Endothelial cell of umbilical vein (primary cell): ENCODE measurements at regions of chr13 and their contacts with region 1.

Region 1: DNA sequence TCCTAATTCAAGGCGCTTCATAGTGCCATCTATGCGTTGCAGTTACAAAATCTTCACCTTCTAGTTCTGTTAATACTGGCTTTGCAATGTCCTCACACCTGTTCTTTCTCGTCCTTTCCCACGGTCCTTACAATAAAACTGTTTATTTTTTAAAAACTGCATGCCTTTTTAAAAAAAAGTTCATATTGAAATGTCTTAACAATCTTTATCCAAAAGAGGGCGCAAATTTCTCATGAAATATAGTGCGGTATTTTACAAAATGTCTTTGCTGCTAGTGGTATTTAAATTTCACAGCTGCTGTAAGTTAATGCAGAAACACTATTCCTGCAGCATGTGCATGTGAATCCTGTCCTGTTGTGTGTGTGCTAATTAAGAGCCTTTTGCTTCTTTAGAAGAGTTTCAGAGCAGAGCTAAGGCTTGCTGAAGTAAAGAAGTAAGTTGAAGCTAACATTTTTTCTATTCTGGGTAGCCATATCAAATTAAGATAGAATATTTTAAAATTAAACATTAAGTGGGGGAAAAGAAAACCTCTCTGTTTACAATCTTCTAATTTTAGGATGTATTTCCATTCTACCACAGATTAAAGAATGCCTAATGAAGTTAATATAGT is 15.8 kb upstream of the CLDN10 start:
- DNase-seq: peak; percentile 62
- H3K4me3 ChIP-seq: no peak overlapping the region
- H3K27ac ChIP-seq: no peak overlapping the region
- H3K4me1 ChIP-seq: peaks cover 34% of the 10 kb centered on the region
- H3K27me3 ChIP-seq: no peaks in the 10 kb centered on the region
- CTCF ChIP-seq: peak in 1 of 2 donors; percentile 25
- POLR2A ChIP-seq: no peak

Region 2: GRCh38 chr13:95426636-95427035 is 110.1 kb before region 1 on chr13:
- CTCF ChIA-PET with region 1: no interaction called
- POLR2A ChIA-PET with region 1: no interaction called
- dilution Hi-C with region 1: no loop called
- intact Hi-C with region 1: no loop called
- DNase-seq: no peak
- H3K4me3 ChIP-seq: no peak overlapping the region
- H3K27ac ChIP-seq: no peak overlapping the region
- H3K4me1 ChIP-seq: no peaks in the 10 kb centered on the region
- H3K27me3 ChIP-seq: no peaks in the 10 kb centered on the region
- CTCF ChIP-seq: no peak
- POLR2A ChIP-seq: no peak

Region 3: GRCh38 chr13:95494082-95494681 is 42.6 kb before region 1 on chr13:
- CTCF ChIA-PET with region 1: interaction called, 7 read pairs
- POLR2A ChIA-PET with region 1: no interaction called
- dilution Hi-C with region 1: no loop called
- intact Hi-C with region 1: loop called (anchors 2 kb)
- DNase-seq: peak; percentile 85
- H3K4me3 ChIP-seq: no peak overlapping the region
- H3K27ac ChIP-seq: no peak overlapping the region
- H3K4me1 ChIP-seq: no peaks in the 10 kb centered on the region
- H3K27me3 ChIP-seq: no peaks in the 10 kb centered on the region
- CTCF ChIP-seq: peak; percentile 48 to 59
- POLR2A ChIP-seq: no peak

Region 4: DNA sequence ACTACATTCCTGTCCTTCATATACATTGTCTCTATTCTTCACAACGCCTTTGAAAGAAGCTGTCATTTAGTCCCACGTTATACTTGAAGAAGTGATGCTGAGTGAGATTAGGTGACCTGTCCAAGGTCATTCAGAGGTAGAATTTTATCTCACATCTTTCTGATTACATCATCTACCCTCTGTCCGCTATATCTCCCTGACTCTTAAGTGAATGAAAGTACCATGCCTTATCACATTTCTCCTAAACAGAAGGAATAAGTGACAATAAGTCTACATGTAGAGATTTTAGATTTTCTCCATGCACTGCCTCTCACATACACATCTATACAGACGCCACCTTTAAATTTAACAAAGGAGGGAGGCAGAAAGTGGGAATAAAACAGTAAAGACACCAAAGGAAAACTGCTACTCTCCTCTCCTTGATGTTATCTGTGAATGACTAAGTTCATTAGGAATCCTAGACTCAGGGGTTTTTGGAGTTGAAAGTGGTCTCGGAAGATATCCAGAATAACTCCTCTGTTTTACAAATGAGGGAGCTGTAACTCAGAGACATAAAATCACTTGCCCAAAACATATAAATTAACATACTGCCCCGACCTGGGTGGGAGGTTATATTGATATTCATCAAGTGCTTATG is 10.9 kb after region 1 on chr13:
- CTCF ChIA-PET with region 1: interaction called, 34 read pairs
- POLR2A ChIA-PET with region 1: interaction called, 4 read pairs
- dilution Hi-C with region 1: no loop called
- intact Hi-C with region 1: no loop called
- DNase-seq: no peak
- H3K4me3 ChIP-seq: no peak overlapping the region
- H3K27ac ChIP-seq: no peak overlapping the region
- H3K4me1 ChIP-seq: no peaks in the 10 kb centered on the region
- H3K27me3 ChIP-seq: peaks cover 1 to 5% of the 10 kb centered on the region in 2 experiments
- CTCF ChIP-seq: no peak
- POLR2A ChIP-seq: no peak

Region 5: GRCh38 chr13:95564733-95565291 is 28.1 kb after region 1 on chr13:
- CTCF ChIA-PET with region 1: interaction called, 57 read pairs
- POLR2A ChIA-PET with region 1: no interaction called
- dilution Hi-C with region 1: no loop called
- intact Hi-C with region 1: no loop called
- DNase-seq: peak; percentile 91
- H3K4me3 ChIP-seq: no peak overlapping the region
- H3K27ac ChIP-seq: peak overlapping the region; percentile 44
- H3K4me1 ChIP-seq: peaks cover 11% of the 10 kb centered on the region
- H3K27me3 ChIP-seq: no peaks in the 10 kb centered on the region
- CTCF ChIP-seq: no peak
- POLR2A ChIP-seq: no peak

Region 6: DNA sequence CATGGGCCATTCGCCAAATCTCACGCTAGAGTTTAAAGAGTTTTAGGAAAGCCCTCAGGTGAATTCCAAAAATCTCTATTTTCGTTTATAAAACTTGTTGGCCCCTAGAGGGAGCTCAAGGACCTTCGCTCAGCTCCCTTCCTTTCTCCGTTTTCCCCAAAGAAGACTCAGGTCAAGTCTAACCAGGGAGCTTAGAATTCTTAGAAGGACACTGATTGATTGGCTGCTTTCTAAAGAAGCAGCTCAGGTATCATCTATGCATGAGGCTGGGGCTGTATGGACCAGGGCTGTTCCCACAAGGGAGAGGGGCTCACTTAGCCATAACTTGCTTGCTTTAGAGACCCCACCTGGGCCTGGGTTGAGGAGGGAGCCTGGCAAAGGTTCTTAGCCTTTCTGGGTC is 87.3 kb after region 1 on chr13:
- CTCF ChIA-PET with region 1: interaction called, 16 read pairs
- POLR2A ChIA-PET with region 1: no interaction called
- dilution Hi-C with region 1: no loop called
- intact Hi-C with region 1: no loop called
- DNase-seq: peak; percentile 50
- H3K4me3 ChIP-seq: no peak overlapping the region
- H3K27ac ChIP-seq: no peak overlapping the region
- H3K4me1 ChIP-seq: no peaks in the 10 kb centered on the region
- H3K27me3 ChIP-seq: no peaks in the 10 kb centered on the region
- CTCF ChIP-seq: peak; percentile 52 to 59
- POLR2A ChIP-seq: no peak

Region 7: DNA sequence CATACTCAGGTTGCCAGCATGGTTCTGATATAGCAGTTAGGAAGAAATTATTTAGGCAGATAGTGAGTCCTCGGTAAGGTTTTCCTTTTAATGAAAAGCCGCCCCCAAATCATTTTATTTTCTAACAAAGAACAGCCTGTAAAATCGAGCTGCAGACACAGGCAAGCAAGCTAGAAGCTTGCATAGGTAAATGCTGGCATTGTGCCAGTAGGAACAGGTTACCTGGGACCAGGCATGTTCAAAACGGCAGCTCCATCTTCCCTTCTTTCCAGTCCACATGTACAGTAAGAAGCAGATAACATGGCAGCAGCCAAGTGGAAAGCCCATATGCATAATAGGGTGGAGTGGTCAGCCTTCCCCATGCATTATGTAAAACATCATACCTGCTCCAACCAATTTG is 445.4 kb after region 1 on chr13:
- CTCF ChIA-PET with region 1: interaction called, 5 read pairs
- POLR2A ChIA-PET with region 1: no interaction called
- dilution Hi-C with region 1: no loop called
- intact Hi-C with region 1: loop called (anchors 10 kb)
- DNase-seq: no peak
- H3K4me3 ChIP-seq: no peak overlapping the region
- H3K27ac ChIP-seq: no peak overlapping the region
- H3K4me1 ChIP-seq: no peaks in the 10 kb centered on the region
- H3K27me3 ChIP-seq: no peaks in the 10 kb centered on the region
- CTCF ChIP-seq: no peak
- POLR2A ChIP-seq: no peak